SK-N-SH (cell line): ENCODE measurements at regions of chr4 and their contacts with region 1.

Region 1: GRCh38 chr4:127598656-127599055 is 34.1 kb upstream of the INTU start:
- DNase-seq: no peak
- H3K4me3 ChIP-seq: no peak overlapping the region
- H3K27ac ChIP-seq: no peak overlapping the region
- H3K4me1 ChIP-seq: no peaks in the 10 kb centered on the region; a peak in 1 of 4 replicates
- H3K27me3 ChIP-seq: no peaks in the 10 kb centered on the region; the same call in 1 of the 2 replicates
- CTCF ChIP-seq: no peak
- EP300 ChIP-seq: no peak
- RAD21 ChIP-seq: no peak

Region 2: GRCh38 chr4:127575888-127576287 is 22.8 kb before region 1 on chr4:
- CTCF ChIA-PET with region 1: no interaction called
- POLR2A ChIA-PET with region 1: no interaction called
- DNase-seq: no peak
- H3K4me3 ChIP-seq: no peak overlapping the region
- H3K27ac ChIP-seq: no peak overlapping the region
- H3K4me1 ChIP-seq: no peaks in the 10 kb centered on the region
- H3K27me3 ChIP-seq: no peaks in the 10 kb centered on the region; the same call in 1 of the 2 replicates
- CTCF ChIP-seq: no peak
- EP300 ChIP-seq: no peak
- RAD21 ChIP-seq: no peak

Region 3: GRCh38 chr4:127586922-127587571 is 11.6 kb before region 1 on chr4:
- CTCF ChIA-PET with region 1: interaction called, 10 read pairs
- POLR2A ChIA-PET with region 1: no interaction called
- DNase-seq: peak; percentile 44
- H3K4me3 ChIP-seq: peak overlapping the region in 1 of 2 experiments; percentile 35; a peak in 2 of 4 replicates
- H3K27ac ChIP-seq: no peak overlapping the region
- H3K4me1 ChIP-seq: no peaks in the 10 kb centered on the region; a peak in 1 of 4 replicates
- H3K27me3 ChIP-seq: no peaks in the 10 kb centered on the region
- CTCF ChIP-seq: peak; percentile 69
- EP300 ChIP-seq: no peak
- RAD21 ChIP-seq: peak; percentile 66

Region 4: GRCh38 chr4:127832585-127832984 is 233.9 kb after region 1 on chr4:
- CTCF ChIA-PET with region 1: no interaction called
- POLR2A ChIA-PET with region 1: no interaction called
- DNase-seq: no peak
- H3K4me3 ChIP-seq: no peak overlapping the region
- H3K27ac ChIP-seq: no peak overlapping the region
- H3K4me1 ChIP-seq: peaks cover 0 to 4% of the 10 kb centered on the region in 2 experiments; a peak in 1 of 4 replicates
- H3K27me3 ChIP-seq: no peaks in the 10 kb centered on the region
- CTCF ChIP-seq: no peak
- EP300 ChIP-seq: no peak
- RAD21 ChIP-seq: no peak